ENCODE measurements at regions of chr14 and their contacts with region 1.

Region 1: GRCh38 chr14:74945823-74946682 is 9.3 kb downstream of the PGF start:
- DNase-seq: peak; percentile 69
- H3K4me3 ChIP-seq: no peak overlapping the region
- H3K27ac ChIP-seq: peak overlapping the region; percentile 30
- H3K4me1 ChIP-seq: peaks cover 39% of the 10 kb centered on the region
- H3K27me3 ChIP-seq: no peaks in the 10 kb centered on the region
- CTCF ChIP-seq: peak; percentile 80 to 96
- POLR2A ChIP-seq: no peak

Region 2: DNA sequence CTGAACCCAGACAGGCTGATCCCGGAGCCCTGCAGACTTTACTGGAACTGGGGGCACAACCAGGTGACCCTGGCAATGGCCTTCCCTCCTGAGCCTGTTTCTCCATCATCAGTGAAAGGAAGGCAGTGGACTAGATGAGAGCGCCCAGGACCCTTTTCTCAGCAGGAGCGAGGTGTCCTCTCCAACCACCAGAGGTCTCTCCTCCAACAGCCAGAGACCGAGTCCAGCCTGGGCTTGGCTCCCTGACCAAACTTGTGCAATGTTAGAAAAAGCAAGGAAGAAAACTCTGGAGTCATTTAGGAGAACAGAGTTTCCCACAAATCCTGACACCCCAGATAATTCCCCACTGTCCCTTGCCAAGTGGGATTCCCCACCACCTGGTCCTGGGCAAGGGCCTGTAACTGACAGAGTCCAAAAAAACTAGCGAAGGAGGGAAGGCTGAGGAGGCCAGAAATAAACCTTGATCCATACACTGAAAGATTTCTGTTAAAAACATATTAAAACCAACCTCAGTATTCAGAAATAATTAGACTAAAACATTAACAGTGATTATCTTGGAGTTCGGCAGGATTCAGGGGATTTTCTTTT is 32.0 kb before region 1 on chr14:
- CTCF ChIA-PET with region 1: interaction called, 10 read pairs
- POLR2A ChIA-PET with region 1: no interaction called
- dilution Hi-C with region 1: no loop called
- intact Hi-C with region 1: loop called (anchors 1 kb)
- DNase-seq: peak; percentile 66
- H3K4me3 ChIP-seq: no peak overlapping the region
- H3K27ac ChIP-seq: no peak overlapping the region
- H3K4me1 ChIP-seq: peaks cover 3% of the 10 kb centered on the region
- H3K27me3 ChIP-seq: no peaks in the 10 kb centered on the region
- CTCF ChIP-seq: peak; percentile 85 to 87
- POLR2A ChIP-seq: no peak

Region 3: GRCh38 chr14:74922739-74923401 is 23.2 kb before region 1 on chr14 and contains the start of gene RPS6KL1:
- CTCF ChIA-PET with region 1: interaction called, 24 read pairs
- POLR2A ChIA-PET with region 1: no interaction called
- dilution Hi-C with region 1: no loop called
- intact Hi-C with region 1: loop called (anchors 2 kb)
- DNase-seq: peak; percentile 87
- H3K4me3 ChIP-seq: peak within 1 kb of the TSS; percentile 55 to 69 (median 58)
- H3K27ac ChIP-seq: peak within 1 kb of the TSS; percentile 50
- H3K4me1 ChIP-seq: peaks cover 5% of the 10 kb centered on the region
- H3K27me3 ChIP-seq: no peaks in the 10 kb centered on the region
- CTCF ChIP-seq: no peak
- POLR2A ChIP-seq: no peak
- total RNA-seq, gene RPS6KL1: 23.8 and 25.6 TPM in 2 replicates

Region 4: GRCh38 chr14:75011356-75011994 is 65.4 kb after region 1 on chr14:
- CTCF ChIA-PET with region 1: interaction called, 17 read pairs
- POLR2A ChIA-PET with region 1: no interaction called
- dilution Hi-C with region 1: no loop called
- intact Hi-C with region 1: no loop called
- DNase-seq: peak; percentile 80
- H3K4me3 ChIP-seq: no peak overlapping the region
- H3K27ac ChIP-seq: peak overlapping the region; percentile 86
- H3K4me1 ChIP-seq: peaks cover 14% of the 10 kb centered on the region
- H3K27me3 ChIP-seq: no peaks in the 10 kb centered on the region
- CTCF ChIP-seq: no peak
- POLR2A ChIP-seq: peak; percentile 24

Region 5: DNA sequence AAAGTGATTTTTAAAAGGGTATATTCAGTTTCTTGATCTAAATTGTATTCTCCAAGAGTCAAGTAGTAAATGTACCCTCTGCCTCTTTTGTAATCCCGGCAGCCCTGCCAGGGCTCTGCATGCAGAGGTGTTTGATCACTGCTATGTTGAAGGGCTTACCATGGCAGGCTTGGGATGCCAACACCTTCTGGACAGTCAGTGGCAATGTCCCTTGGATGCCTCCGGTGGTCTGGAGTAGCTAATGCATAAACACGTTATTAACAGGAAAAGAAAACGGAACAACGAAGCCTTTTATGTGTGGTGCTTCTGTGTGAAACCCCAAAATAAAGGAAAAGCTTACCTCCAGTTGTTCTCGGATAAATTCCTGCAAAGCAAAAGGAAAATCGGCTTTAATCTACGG is 76.6 kb after region 1 on chr14:
- CTCF ChIA-PET with region 1: interaction called, 25 read pairs
- POLR2A ChIA-PET with region 1: no interaction called
- dilution Hi-C with region 1: no loop called
- intact Hi-C with region 1: no loop called
- DNase-seq: peak; percentile 13
- H3K4me3 ChIP-seq: no peak overlapping the region
- H3K27ac ChIP-seq: no peak overlapping the region
- H3K4me1 ChIP-seq: peaks cover 20% of the 10 kb centered on the region
- H3K27me3 ChIP-seq: no peaks in the 10 kb centered on the region
- CTCF ChIP-seq: peak; percentile 33 to 53
- POLR2A ChIP-seq: no peak

Region 6: GRCh38 chr14:75069045-75069810 is 123.2 kb after region 1 on chr14 and contains the start of gene ZC2HC1C:
- CTCF ChIA-PET with region 1: interaction called, 15 read pairs
- POLR2A ChIA-PET with region 1: interaction called, 3 read pairs
- dilution Hi-C with region 1: no loop called
- intact Hi-C with region 1: loop called (anchors 2 kb)
- DNase-seq: peak; percentile 91
- H3K4me3 ChIP-seq: peak within 1 kb of the TSS; percentile 31 to 69 (median 59)
- H3K27ac ChIP-seq: peak within 1 kb of the TSS; percentile 86
- H3K4me1 ChIP-seq: peaks cover 14% of the 10 kb centered on the region
- H3K27me3 ChIP-seq: no peaks in the 10 kb centered on the region
- CTCF ChIP-seq: no peak
- POLR2A ChIP-seq: peak; percentile 77
- total RNA-seq, gene ZC2HC1C: 0.91 and 3.6 TPM in 2 replicates

Measured in endothelial cell of umbilical vein (primary cell).